A549 (cell line): ENCODE measurements at regions of chr10 and their contacts with region 1.

Region 1: DNA sequence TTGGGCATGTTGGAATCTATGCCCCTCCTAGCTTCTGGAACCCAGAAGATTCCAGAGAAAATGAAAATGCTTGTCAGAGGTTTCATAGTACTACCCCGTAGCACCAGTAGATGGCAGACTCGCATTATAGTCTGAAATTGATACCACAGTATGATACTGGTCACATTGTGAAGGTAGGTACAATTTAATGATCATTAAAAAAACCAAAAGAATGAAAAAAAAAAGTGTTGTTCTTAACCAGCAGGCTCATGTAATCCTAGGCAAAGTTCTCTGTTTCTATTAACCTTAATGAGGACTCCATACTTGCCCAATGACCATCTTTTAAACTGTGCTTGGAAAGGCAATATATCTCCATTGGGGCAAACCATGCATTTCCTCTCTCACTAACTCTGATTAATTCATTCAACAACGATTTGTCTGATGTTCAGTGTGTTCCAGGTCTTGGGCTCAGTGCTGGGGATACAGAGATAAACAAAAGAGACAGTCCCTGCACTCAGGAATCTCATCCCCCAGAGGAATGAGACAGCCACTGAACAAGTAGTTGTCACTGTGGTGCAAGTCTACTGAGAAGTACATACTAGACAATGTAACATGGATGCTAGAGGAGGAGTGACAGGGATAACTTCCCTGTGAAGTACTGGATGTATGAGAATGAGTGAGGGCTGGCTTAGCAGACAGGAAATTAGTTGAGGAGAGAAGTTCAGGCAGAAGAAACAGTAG is 223.5 kb upstream of the PHYHIPL start:
- DNase-seq: peak; percentile 20 to 52
- ATAC-seq: peak; percentile 76 to 91
- H3K4me3 ChIP-seq: no peak overlapping the region
- H3K27ac ChIP-seq: peak overlapping the region in 1 of 2 experiments; percentile 46; a peak in 2 of 6 replicates
- H3K4me1 ChIP-seq: peaks cover 16% of the 10 kb centered on the region
- CTCF ChIP-seq: peak; percentile 92
- EP300 ChIP-seq: no peak
- POLR2A ChIP-seq: no peak
- RAD21 ChIP-seq: peak; percentile 93 to 95

Region 2: GRCh38 chr10:58937423-58937822 is 15.5 kb before region 1 on chr10:
- CTCF ChIA-PET with region 1: interaction called, 10 read pairs
- POLR2A ChIA-PET with region 1: no interaction called
- DNase-seq: no peak
- ATAC-seq: no peak
- H3K4me3 ChIP-seq: no peak overlapping the region
- H3K27ac ChIP-seq: no peak overlapping the region
- H3K4me1 ChIP-seq: no peaks in the 10 kb centered on the region
- CTCF ChIP-seq: no peak
- EP300 ChIP-seq: no peak
- POLR2A ChIP-seq: no peak
- RAD21 ChIP-seq: no peak

Region 3: DNA sequence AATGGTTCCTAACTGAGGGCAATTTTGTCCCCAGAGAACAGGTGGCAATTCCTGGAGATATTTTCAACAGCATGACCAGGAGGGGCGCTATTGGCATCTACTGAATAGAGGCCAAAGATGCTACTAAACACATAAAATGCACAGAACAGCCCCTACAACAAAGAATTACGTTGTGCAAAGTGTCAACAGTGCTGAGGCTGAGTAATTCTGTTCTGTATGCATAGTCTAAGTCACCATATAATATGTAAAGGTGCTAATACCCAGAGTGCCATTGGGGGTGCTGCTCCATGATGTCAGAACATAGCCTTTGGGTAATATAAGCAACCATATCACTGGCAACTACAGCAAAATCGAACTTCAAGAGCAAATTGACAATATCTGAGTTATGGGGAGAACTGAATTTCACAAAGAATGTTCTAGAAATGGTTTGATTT is 10.2 kb after region 1 on chr10:
- CTCF ChIA-PET with region 1: interaction called, 28 read pairs
- POLR2A ChIA-PET with region 1: no interaction called
- DNase-seq: peak in 1 of 2 experiments; percentile 21
- ATAC-seq: no peak
- H3K4me3 ChIP-seq: no peak overlapping the region
- H3K27ac ChIP-seq: no peak overlapping the region
- H3K4me1 ChIP-seq: peaks cover 14% of the 10 kb centered on the region
- CTCF ChIP-seq: 0 out of 3 replicates have a peak, but pooled peaks have one; percentile 17
- EP300 ChIP-seq: no peak
- POLR2A ChIP-seq: no peak
- RAD21 ChIP-seq: peak in 1 of 2 experiments; percentile 35; a peak in 2 of 5 replicates

Region 4: GRCh38 chr10:58992830-58993460 is 40.0 kb after region 1 on chr10:
- CTCF ChIA-PET with region 1: interaction called, 10 read pairs
- POLR2A ChIA-PET with region 1: no interaction called
- DNase-seq: no peak
- ATAC-seq: no peak
- H3K4me3 ChIP-seq: no peak overlapping the region
- H3K27ac ChIP-seq: peak overlapping the region; percentile 72 to 87
- H3K4me1 ChIP-seq: peaks cover 30% of the 10 kb centered on the region
- CTCF ChIP-seq: no peak
- EP300 ChIP-seq: no peak
- POLR2A ChIP-seq: no peak
- RAD21 ChIP-seq: no peak

Region 5: GRCh38 chr10:59167512-59167911 is 214.6 kb after region 1 on chr10:
- CTCF ChIA-PET with region 1: interaction called, 13 read pairs
- POLR2A ChIA-PET with region 1: no interaction called
- DNase-seq: no peak
- ATAC-seq: no peak
- H3K4me3 ChIP-seq: no peak overlapping the region
- H3K27ac ChIP-seq: no peak overlapping the region
- H3K4me1 ChIP-seq: no peaks in the 10 kb centered on the region
- CTCF ChIP-seq: no peak
- EP300 ChIP-seq: no peak
- POLR2A ChIP-seq: no peak
- RAD21 ChIP-seq: no peak

Region 6: GRCh38 chr10:59181668-59182067 is 228.8 kb after region 1 on chr10:
- CTCF ChIA-PET with region 1: interaction called, 12 read pairs
- POLR2A ChIA-PET with region 1: no interaction called
- DNase-seq: peak; percentile 52 to 83
- ATAC-seq: peak; percentile 93 to 94
- H3K4me3 ChIP-seq: no peak overlapping the region
- H3K27ac ChIP-seq: no peak overlapping the region
- H3K4me1 ChIP-seq: peaks cover 5% of the 10 kb centered on the region; the same call in 2 of the 3 replicates
- CTCF ChIP-seq: peak; percentile 84
- EP300 ChIP-seq: no peak
- POLR2A ChIP-seq: no peak
- RAD21 ChIP-seq: peak; percentile 82 to 84